Cardiac septum (tissue), 1 donor: ENCODE measurements at regions of chr16 and their contacts with region 1.

Region 1: GRCh38 chr16:85554112-85554813 is 58.9 kb upstream of the GSE1 start:
- DNase-seq: peak; percentile 92

Region 2: DNA sequence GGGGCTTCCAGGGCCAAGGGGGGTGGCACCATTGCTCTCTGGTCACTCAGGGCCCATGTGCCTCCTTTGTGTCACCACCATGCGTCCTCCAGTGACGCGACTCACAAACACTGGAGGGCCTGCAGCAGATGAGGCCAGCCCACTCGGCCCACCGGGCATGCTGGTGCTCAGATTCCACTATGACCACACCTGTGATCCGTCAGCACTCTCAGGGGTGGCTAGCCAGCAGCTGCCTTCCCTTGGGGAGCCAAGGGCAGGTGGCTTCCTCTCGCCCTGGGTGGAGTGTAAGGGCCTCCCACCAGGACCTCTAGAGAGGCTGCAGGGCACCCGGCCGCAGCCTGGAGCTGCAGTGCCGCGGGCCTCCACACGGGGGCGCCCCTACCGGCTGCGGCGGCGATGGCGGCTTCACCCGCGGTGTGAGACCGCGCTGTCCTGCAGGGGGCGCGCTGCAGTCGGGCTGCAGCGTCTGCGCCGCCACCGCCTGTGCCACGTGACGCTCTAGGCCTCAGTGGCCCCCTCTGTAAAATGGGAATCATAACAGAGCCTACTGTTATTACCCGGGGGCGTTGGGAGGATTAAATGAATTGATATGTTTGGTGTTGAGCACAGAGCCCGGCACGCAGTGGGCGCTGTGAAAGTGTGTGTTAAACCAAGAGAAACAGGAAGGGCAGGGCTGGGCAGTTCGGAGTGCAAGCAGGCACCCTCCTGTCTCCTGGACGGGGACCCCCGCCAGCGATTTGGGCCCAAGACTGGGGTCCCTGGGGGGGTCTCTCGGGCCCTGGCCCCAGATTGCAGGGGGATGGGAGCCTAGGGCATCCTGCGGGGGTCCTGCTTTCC is 133.5 kb before region 1 on chr16:
- intact Hi-C with region 1: loop called (anchors 5 kb)
- DNase-seq: peak; percentile 87

Region 3: GRCh38 chr16:85491058-85491771 is 63.0 kb before region 1 on chr16:
- intact Hi-C with region 1: loop called (anchors 2 kb)
- DNase-seq: no peak

Region 4: GRCh38 chr16:85717393-85718121 is 163.3 kb after region 1 on chr16:
- intact Hi-C with region 1: no loop called
- DNase-seq: peak; percentile 78